AG04449 (cell line): ENCODE measurements at regions of chr5 and their contacts with region 1.

Region 1: GRCh38 chr5:149114403-149115312 is 26.6 kb upstream of the ABLIM3 start:
- DNase-seq: peak; percentile 54
- H3K4me3 ChIP-seq: no peak overlapping the region
- CTCF ChIP-seq: peak; percentile 86

Region 2: DNA sequence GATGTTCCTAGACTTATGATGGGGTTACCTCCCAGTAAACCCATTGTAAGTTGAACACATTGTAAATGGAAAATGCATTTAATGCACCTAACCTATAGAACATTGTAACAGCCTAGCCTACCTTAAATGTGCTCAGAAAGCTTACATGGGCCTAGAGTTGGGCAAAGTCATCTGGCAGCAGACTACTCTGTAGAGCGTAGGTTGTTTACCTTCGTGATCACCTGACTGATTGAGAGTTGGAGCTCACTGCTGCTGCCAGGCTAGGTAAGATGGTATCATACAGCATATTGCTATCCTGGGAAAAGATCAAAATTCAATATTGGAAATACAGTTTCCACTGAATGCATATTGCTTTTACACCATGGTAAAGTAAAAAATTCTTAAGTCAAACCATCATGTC is 555.8 kb before region 1 on chr5:
- CTCF ChIA-PET with region 1: no interaction called
- POLR2A ChIA-PET with region 1: no interaction called
- DNase-seq: no peak
- H3K4me3 ChIP-seq: no peak overlapping the region
- CTCF ChIP-seq: no peak

Region 3: DNA sequence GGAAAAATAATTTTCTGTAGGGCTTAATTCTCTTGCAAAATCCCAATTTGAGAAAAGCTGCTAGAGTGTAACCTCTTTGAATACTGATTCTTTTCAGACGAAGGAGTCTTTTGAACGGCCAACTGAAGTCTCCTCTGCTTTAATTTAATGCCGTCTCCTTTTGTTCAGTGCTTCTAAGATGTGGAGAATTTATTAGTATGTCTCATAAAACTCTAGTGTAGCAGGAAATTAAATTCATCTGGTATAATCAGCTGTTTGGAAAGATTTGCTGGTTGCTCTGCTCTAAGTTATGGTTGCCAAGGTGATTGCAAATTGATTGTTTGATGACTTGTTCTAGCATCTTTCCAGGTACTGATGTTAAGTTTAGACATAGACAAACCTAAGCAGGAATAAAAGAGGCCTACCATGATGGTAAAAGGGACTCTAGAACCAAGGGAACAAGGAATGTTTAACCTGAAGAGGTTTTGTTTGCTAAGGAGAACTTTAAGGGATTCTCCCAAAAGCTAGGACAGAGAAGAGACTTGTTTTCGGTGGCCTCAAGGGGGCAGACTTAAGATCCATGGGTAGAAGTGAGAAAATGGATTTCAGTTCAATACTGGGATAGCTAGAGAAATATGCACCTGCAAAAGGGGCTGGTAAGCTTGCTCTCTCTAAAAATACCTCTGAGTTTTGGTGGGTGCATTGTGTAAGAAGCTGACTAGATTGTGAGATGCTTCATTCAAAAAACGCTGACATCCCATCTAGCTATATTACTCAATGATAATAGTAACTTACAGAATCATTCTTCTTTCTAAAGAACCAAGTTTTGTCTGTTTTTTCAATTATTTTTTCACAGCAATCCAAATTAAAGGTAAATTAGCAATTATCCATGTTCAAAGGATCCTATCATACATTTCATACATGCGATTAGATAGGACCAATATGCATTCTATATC is 293.9 kb before region 1 on chr5:
- CTCF ChIA-PET with region 1: interaction called, 26 read pairs
- POLR2A ChIA-PET with region 1: no interaction called
- DNase-seq: no peak
- H3K4me3 ChIP-seq: no peak overlapping the region
- CTCF ChIP-seq: peak; percentile 53

Region 4: GRCh38 chr5:148998174-148998797 is 116.4 kb before region 1 on chr5:
- CTCF ChIA-PET with region 1: interaction called, 37 read pairs
- POLR2A ChIA-PET with region 1: no interaction called
- DNase-seq: no peak
- H3K4me3 ChIP-seq: no peak overlapping the region
- CTCF ChIP-seq: peak; percentile 57

Region 5: DNA sequence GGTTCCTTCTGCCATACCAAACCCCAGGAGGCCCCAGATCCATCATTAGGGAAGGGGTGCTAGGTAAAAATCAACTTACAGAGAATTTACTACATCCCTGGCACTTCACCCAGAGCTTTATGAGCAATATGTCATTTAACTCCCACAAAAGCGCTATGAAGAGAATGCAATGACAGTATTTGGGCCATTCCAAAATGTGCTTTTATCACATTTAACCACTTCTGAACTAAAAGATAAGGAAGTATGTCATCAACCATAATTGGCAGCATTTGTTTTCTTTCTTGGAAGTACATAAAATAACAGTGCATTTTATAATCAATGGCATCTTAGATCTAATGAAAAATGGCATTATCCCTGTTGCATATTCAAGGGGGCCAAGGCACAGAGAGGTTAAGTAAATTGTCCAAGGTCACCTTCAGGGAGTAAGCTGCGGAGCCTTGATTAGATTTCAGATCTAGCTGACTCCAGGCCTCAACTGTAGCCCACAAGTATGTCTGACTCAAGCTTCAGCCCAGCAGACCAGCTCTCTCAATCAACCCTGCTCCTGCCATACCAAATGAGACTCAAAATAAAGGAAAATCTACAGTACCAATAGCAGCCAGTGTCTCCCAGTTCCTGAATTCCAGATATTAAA is 68.3 kb before region 1 on chr5:
- CTCF ChIA-PET with region 1: interaction called, 126 read pairs
- POLR2A ChIA-PET with region 1: no interaction called
- DNase-seq: no peak
- H3K4me3 ChIP-seq: no peak overlapping the region
- CTCF ChIP-seq: no peak

Region 6: GRCh38 chr5:149069452-149070110 is 45.1 kb before region 1 on chr5:
- CTCF ChIA-PET with region 1: interaction called, 11 read pairs
- POLR2A ChIA-PET with region 1: no interaction called
- DNase-seq: no peak
- H3K4me3 ChIP-seq: no peak overlapping the region
- CTCF ChIP-seq: no peak

Region 7: GRCh38 chr5:149181732-149182131 is 67.1 kb after region 1 on chr5:
- CTCF ChIA-PET with region 1: no interaction called
- POLR2A ChIA-PET with region 1: no interaction called
- DNase-seq: no peak
- H3K4me3 ChIP-seq: no peak overlapping the region
- CTCF ChIP-seq: no peak

Region 8: DNA sequence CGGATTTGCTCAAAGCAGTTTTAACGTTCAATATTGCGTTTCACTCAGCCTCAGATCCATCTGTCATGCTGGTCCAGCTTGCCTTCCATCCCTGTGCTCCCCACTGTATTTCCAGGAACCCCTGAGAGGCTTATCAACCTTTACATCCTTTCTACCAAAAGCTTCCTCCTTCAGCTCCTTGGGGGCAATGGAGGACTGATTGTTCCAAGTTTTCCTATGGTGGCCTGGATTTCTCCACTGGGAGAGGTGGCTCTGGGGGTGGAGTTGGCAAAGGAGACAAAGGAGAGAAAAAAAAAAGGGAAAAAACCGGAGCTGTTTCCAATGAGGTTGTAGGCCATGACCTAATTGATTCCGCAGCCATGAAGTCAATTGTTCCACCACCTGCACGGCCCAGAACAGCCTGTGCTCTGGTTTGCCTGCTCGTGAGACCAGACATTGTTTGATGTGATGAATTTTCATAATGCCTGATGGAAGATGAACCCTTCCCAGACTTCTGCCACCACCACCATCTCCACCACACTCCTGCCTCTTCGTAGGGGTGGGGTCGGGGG is 80.8 kb after region 1 on chr5:
- CTCF ChIA-PET with region 1: no interaction called
- POLR2A ChIA-PET with region 1: no interaction called
- DNase-seq: no peak
- H3K4me3 ChIP-seq: no peak overlapping the region
- CTCF ChIP-seq: no peak

Region 9: GRCh38 chr5:149228618-149229297 is 114.1 kb after region 1 on chr5:
- CTCF ChIA-PET with region 1: interaction called, 47 read pairs
- POLR2A ChIA-PET with region 1: no interaction called
- DNase-seq: peak; percentile 55
- H3K4me3 ChIP-seq: no peak overlapping the region
- CTCF ChIP-seq: peak; percentile 67

Region 10: DNA sequence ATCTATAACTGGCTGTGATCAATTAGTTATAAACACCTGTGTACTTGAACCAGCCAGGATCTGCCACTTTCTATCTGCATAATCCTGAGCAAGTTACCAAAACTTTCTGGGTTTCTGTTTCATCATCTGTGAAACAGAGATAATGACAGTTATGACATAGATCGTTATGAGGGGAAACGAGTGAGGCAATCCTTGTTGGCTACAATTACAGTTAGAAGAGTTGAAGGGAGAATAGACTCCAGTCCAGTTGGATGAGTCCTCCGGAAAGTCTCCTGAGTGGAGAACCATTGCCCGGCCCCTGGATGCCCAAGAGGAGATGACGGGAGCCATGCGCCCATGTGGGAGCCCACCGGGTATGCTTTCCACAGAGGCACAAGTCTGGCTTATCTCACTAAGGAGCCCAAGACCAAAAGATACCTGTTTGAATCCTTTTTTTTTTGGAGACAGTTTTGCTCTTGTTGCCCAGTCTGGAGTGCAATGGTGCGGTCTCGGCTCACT is 825.5 kb after region 1 on chr5:
- CTCF ChIA-PET with region 1: no interaction called
- POLR2A ChIA-PET with region 1: no interaction called
- DNase-seq: no peak
- H3K4me3 ChIP-seq: no peak overlapping the region
- CTCF ChIP-seq: no peak